Upper lobe of right lung (tissue), 1 donor: ENCODE measurements at regions of chr7 and their contacts with region 1.

Region 1: GRCh38 chr7:139995017-139995931 is 67.5 kb downstream of the PARP12 start:
- DNase-seq: no peak
- ATAC-seq: peak; percentile 24
- H3K4me3 ChIP-seq: no peak overlapping the region
- H3K27ac ChIP-seq: no peak overlapping the region
- H3K4me1 ChIP-seq: no peaks in the 10 kb centered on the region
- H3K27me3 ChIP-seq: no peaks in the 10 kb centered on the region
- CTCF ChIP-seq: no peak

Region 2: GRCh38 chr7:139783647-139784385 is 211.5 kb before region 1 on chr7:
- intact Hi-C with region 1: loop called (anchors 10 kb)
- DNase-seq: no peak
- ATAC-seq: no peak
- H3K4me3 ChIP-seq: no peak overlapping the region
- H3K27ac ChIP-seq: no peak overlapping the region
- H3K4me1 ChIP-seq: peaks cover under 1% of the 10 kb centered on the region
- H3K27me3 ChIP-seq: no peaks in the 10 kb centered on the region
- CTCF ChIP-seq: no peak

Region 3: GRCh38 chr7:140165422-140165821 is 170.1 kb after region 1 on chr7:
- intact Hi-C with region 1: no loop called
- DNase-seq: no peak
- ATAC-seq: no peak
- H3K4me3 ChIP-seq: no peak overlapping the region
- H3K27ac ChIP-seq: no peak overlapping the region
- H3K4me1 ChIP-seq: peaks cover 5% of the 10 kb centered on the region
- H3K27me3 ChIP-seq: no peaks in the 10 kb centered on the region
- CTCF ChIP-seq: no peak